ENCODE measurements at regions of chr14 and their contacts with region 1.

Region 1: GRCh38 chr14:95527387-95528002 is 7.4 kb upstream of the GLRX5 start:
- DNase-seq: peak in 1 of 2 experiments; percentile 53
- H3K4me3 ChIP-seq: no peak overlapping the region
- H3K4me3 Mint-ChIP-seq: no peak overlapping the region
- H3K27ac Mint-ChIP-seq: peak overlapping the region; percentile 80
- H3K4me1 ChIP-seq: peaks cover 70% of the 10 kb centered on the region
- H3K4me1 Mint-ChIP-seq: peaks cover 48% of the 10 kb centered on the region
- H3K27me3 ChIP-seq: no peaks in the 10 kb centered on the region
- H3K27me3 Mint-ChIP-seq: no peaks in the 10 kb centered on the region
- CTCF ChIP-seq: peak; percentile 53 to 62

Region 2: GRCh38 chr14:95452176-95452892 is 75.2 kb before region 1 on chr14:
- CTCF ChIA-PET with region 1: interaction called, 13 read pairs
- POLR2A ChIA-PET with region 1: no interaction called
- intact Hi-C with region 1: no loop called
- DNase-seq: peak in 1 of 2 experiments; percentile 36
- H3K4me3 ChIP-seq: no peak overlapping the region
- H3K4me3 Mint-ChIP-seq: no peak overlapping the region
- H3K27ac Mint-ChIP-seq: no peak overlapping the region
- H3K4me1 ChIP-seq: no peaks in the 10 kb centered on the region
- H3K4me1 Mint-ChIP-seq: no peaks in the 10 kb centered on the region
- H3K27me3 ChIP-seq: no peaks in the 10 kb centered on the region
- H3K27me3 Mint-ChIP-seq: no peaks in the 10 kb centered on the region
- CTCF ChIP-seq: peak; percentile 23 to 50

Region 3: GRCh38 chr14:95490727-95491451 is 36.6 kb before region 1 on chr14:
- CTCF ChIA-PET with region 1: interaction called, 3 read pairs
- POLR2A ChIA-PET with region 1: no interaction called
- intact Hi-C with region 1: loop called (anchors 2 kb)
- DNase-seq: peak; percentile 73 to 82
- H3K4me3 ChIP-seq: no peak overlapping the region
- H3K4me3 Mint-ChIP-seq: peak overlapping the region; percentile 41
- H3K27ac Mint-ChIP-seq: peak overlapping the region; percentile 85
- H3K4me1 ChIP-seq: peaks cover 50% of the 10 kb centered on the region
- H3K4me1 Mint-ChIP-seq: peaks cover 44% of the 10 kb centered on the region
- H3K27me3 ChIP-seq: no peaks in the 10 kb centered on the region
- H3K27me3 Mint-ChIP-seq: no peaks in the 10 kb centered on the region
- CTCF ChIP-seq: no peak

Region 4: GRCh38 chr14:95549656-95550585 is 22.4 kb after region 1 on chr14:
- CTCF ChIA-PET with region 1: no interaction called
- POLR2A ChIA-PET with region 1: no interaction called
- intact Hi-C with region 1: no loop called
- DNase-seq: no peak
- H3K4me3 ChIP-seq: no peak overlapping the region
- H3K4me3 Mint-ChIP-seq: no peak overlapping the region
- H3K27ac Mint-ChIP-seq: peak overlapping the region; percentile 15
- H3K4me1 ChIP-seq: no peaks in the 10 kb centered on the region; the same call in 1 of the 2 replicates
- H3K4me1 Mint-ChIP-seq: peaks cover 9% of the 10 kb centered on the region
- H3K27me3 ChIP-seq: no peaks in the 10 kb centered on the region
- H3K27me3 Mint-ChIP-seq: no peaks in the 10 kb centered on the region
- CTCF ChIP-seq: no peak

Measured in Caco-2 (cell line).